CD4-positive, alpha-beta memory T cell (primary cell): ENCODE measurements at regions of chr11 and their contacts with region 1.

Region 1: DNA sequence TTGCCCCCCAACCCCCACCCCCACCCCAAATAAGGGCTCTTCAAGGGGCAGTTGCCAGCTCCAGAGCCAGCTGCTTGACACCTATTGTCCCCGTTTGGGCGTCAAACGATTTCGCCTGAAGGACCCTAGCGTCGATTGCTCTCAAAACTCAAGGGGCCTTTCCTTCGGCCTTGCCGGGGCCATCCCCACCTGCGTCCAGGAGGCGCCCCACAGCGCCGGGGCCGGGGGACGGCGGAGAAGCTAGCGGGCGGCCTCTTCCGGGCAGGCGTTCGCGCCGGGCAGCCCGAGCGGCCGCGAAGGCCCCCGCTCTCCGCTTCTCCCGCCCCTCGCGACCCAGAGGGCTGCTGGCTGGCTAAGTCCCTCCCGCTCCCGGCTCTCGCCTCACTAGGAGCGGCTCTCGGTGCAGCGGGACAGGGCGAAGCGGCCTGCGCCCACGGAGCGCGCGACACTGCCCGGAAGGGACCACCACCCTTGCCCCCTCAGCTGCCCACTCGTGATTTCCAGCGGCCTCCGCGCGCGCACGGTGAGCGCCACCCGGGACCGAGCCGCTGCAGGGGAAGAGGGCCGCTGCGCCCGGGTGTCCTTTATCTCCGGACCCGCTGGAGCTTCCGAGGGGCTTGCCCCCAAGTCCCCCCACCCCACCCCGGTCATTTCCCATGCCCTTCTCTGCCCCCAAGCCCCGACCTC is at the start of gene CAPRIN1:
- DNase-seq: peak; percentile 88 to 94 (median 91)
- H3K4me3 ChIP-seq: peak within 1 kb of the TSS; percentile 84 to 97
- H3K4me3 Mint-ChIP-seq: peak within 1 kb of the TSS; percentile 95 to 99 (median 97)
- H3K27ac ChIP-seq: peak within 1 kb of the TSS; percentile 97
- H3K27ac Mint-ChIP-seq: peak within 1 kb of the TSS; percentile 95 to 99 (median 97)
- H3K4me1 ChIP-seq: peaks cover 34% of the 10 kb centered on the region
- H3K4me1 Mint-ChIP-seq: peaks cover 14 to 40% (median 23%) of the 10 kb centered on the region in 4 donors
- H3K27me3 ChIP-seq: no peaks in the 10 kb centered on the region
- H3K27me3 Mint-ChIP-seq: no peaks in the 10 kb centered on the region
- total RNA-seq, gene CAPRIN1: 160 to 176 TPM

Region 2: DNA sequence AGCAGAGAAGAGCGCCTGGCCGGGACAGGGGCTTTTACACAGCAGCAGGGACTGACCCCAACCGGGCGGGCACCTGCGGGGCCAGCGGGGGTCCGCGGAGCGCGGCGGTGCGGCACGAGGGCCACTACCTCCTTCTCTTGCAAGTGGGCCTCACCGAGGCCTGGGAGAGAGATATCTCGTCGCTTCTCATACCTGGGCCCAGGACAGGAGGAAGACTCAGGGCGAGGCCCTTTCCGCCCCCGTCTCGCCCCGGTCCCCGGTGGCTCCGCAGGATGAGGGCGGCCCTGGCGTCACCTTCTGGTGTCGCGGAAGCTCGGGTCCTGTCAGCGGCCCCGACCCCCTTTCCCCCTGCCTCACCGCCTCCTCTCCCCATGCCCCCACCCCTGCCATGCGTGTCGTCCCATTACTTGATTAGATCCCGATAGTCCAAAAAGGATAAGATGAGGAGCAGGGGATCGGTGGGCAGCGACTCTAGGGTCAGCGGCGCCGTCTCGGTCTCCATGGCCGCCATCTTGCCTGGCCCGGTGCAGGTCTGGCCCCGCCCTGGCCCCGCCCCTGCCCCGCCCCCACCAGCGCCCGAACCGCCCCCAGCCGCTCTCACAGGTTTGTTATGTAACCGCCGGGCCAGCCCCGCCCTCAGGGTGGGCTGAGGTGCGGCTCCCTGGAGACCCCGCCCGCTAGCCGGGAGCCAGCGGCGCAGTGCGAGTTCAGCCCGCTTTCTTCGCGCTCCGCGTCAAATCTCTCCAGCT is 277.3 kb before region 1 on chr11 and contains the start of gene FBXO3:
- CTCF ChIA-PET with region 1: no interaction called
- POLR2A ChIA-PET with region 1: interaction called, 7 read pairs
- intact Hi-C with region 1: loop called (anchors 1 kb)
- DNase-seq: peak; percentile 88 to 89 (median 89)
- H3K4me3 ChIP-seq: peak within 1 kb of the TSS; percentile 85 to 90
- H3K4me3 Mint-ChIP-seq: peak within 1 kb of the TSS; percentile 93 to 99 (median 96)
- H3K27ac ChIP-seq: peak within 1 kb of the TSS; percentile 79
- H3K27ac Mint-ChIP-seq: peak within 1 kb of the TSS; percentile 94 to 99 (median 99)
- H3K4me1 ChIP-seq: peaks cover 42% of the 10 kb centered on the region
- H3K4me1 Mint-ChIP-seq: peaks cover 31 to 64% (median 49%) of the 10 kb centered on the region in 4 donors
- H3K27me3 ChIP-seq: no peaks in the 10 kb centered on the region
- H3K27me3 Mint-ChIP-seq: peaks cover 0 to 3% of the 10 kb centered on the region in 2 donors
- total RNA-seq, gene FBXO3: 55.1 to 55.6 TPM

Region 3: GRCh38 chr11:33959855-33960400 is 91.6 kb before region 1 on chr11:
- CTCF ChIA-PET with region 1: no interaction called
- POLR2A ChIA-PET with region 1: no interaction called
- intact Hi-C with region 1: no loop called
- DNase-seq: no peak
- H3K4me3 ChIP-seq: no peak overlapping the region
- H3K4me3 Mint-ChIP-seq: no peak overlapping the region
- H3K27ac ChIP-seq: no peak overlapping the region
- H3K27ac Mint-ChIP-seq: no peak overlapping the region
- H3K4me1 ChIP-seq: no peaks in the 10 kb centered on the region
- H3K4me1 Mint-ChIP-seq: no peaks in the 10 kb centered on the region
- H3K27me3 ChIP-seq: no peaks in the 10 kb centered on the region
- H3K27me3 Mint-ChIP-seq: peaks cover 11 to 19% of the 10 kb centered on the region in 2 donors

Region 4: GRCh38 chr11:34063061-34063795 is 11.7 kb after region 1 on chr11:
- CTCF ChIA-PET with region 1: interaction called, 3 read pairs
- POLR2A ChIA-PET with region 1: interaction called, 10 read pairs
- intact Hi-C with region 1: no loop called
- DNase-seq: no peak
- H3K4me3 ChIP-seq: no peak overlapping the region
- H3K4me3 Mint-ChIP-seq: peak overlapping the region in 5 of 8 donors; percentile 2 to 71 (median 44)
- H3K27ac ChIP-seq: no peak overlapping the region
- H3K27ac Mint-ChIP-seq: peak overlapping the region in 6 of 7 donors; percentile 1 to 67 (median 24)
- H3K4me1 ChIP-seq: peaks cover 79% of the 10 kb centered on the region
- H3K4me1 Mint-ChIP-seq: peaks cover 44 to 79% (median 64%) of the 10 kb centered on the region in 4 donors
- H3K27me3 ChIP-seq: no peaks in the 10 kb centered on the region
- H3K27me3 Mint-ChIP-seq: no peaks in the 10 kb centered on the region

Region 5: GRCh38 chr11:34105079-34105956 is 53.8 kb after region 1 on chr11 and contains the start of gene NAT10:
- CTCF ChIA-PET with region 1: interaction called, 12 read pairs
- POLR2A ChIA-PET with region 1: interaction called, 157 read pairs
- intact Hi-C with region 1: loop called (anchors 1 kb)
- DNase-seq: peak; percentile 96 to 98 (median 97)
- H3K4me3 ChIP-seq: peak within 1 kb of the TSS; percentile 83 to 86
- H3K4me3 Mint-ChIP-seq: peak within 1 kb of the TSS; percentile 95 to 98 (median 97)
- H3K27ac ChIP-seq: peak within 1 kb of the TSS; percentile 90
- H3K27ac Mint-ChIP-seq: peak within 1 kb of the TSS; percentile 99 to 100 (median 99)
- H3K4me1 ChIP-seq: peaks cover 31% of the 10 kb centered on the region
- H3K4me1 Mint-ChIP-seq: peaks cover 41 to 67% (median 51%) of the 10 kb centered on the region in 4 donors
- H3K27me3 ChIP-seq: no peaks in the 10 kb centered on the region
- H3K27me3 Mint-ChIP-seq: peaks cover 0 to 2% of the 10 kb centered on the region in 2 donors
- total RNA-seq, gene NAT10: 73.6 to 81.5 TPM